B cell (primary cell): ENCODE measurements at regions of chr7 and their contacts with region 1.

Region 1: DNA sequence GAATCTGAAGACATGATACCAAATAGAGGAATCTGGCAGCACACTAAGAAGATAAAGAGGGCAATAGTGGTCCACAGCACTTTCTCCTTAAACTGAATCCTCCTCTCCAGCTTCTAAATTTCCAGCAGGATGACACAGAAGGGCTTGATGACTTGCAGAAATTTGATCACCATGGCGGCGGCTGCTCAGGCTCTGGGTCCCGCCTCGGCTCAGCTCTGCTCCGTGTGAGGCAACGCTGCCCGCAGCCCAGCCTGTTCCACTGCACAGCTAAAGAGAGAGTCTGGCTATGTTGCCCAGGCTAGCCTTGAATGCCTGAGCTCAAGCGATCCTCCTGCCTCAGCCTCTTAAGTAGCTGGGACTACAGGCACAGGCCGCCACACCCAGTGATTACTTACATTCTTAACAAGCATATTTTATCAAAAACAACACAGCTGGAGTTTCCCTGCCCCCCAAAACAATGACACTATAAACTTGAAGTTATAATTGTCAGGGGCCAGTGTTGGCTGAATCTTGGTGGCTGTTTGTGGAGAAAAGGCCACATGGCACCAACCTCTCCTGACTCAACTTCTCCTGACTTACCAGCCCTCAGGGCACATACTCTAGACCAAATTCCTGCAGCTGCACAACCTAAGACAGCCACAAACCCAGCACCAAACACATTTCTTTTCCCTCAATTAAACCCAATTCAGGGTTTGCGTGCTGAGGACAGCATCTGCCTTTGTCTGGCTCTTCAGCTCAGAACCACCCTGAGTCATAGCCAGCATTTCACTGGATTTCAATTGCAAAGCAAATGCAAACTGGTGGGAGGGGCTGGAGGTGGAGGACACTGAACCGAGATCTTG is 11.6 kb upstream of the TNPO3 start:
- DNase-seq: no peak
- ATAC-seq: no peak
- H3K4me3 ChIP-seq: no peak overlapping the region
- H3K4me3 Mint-ChIP-seq: no peak overlapping the region
- H3K27ac ChIP-seq: no peak overlapping the region
- H3K27ac Mint-ChIP-seq: no peak overlapping the region
- H3K4me1 ChIP-seq: no peaks in the 10 kb centered on the region
- H3K4me1 Mint-ChIP-seq: peaks cover 3% of the 10 kb centered on the region
- H3K27me3 ChIP-seq: peaks cover 0 to 6% (median 1%) of the 10 kb centered on the region in 4 experiments
- H3K27me3 Mint-ChIP-seq: peaks cover 2% of the 10 kb centered on the region
- CTCF ChIP-seq: no peak

Region 2: DNA sequence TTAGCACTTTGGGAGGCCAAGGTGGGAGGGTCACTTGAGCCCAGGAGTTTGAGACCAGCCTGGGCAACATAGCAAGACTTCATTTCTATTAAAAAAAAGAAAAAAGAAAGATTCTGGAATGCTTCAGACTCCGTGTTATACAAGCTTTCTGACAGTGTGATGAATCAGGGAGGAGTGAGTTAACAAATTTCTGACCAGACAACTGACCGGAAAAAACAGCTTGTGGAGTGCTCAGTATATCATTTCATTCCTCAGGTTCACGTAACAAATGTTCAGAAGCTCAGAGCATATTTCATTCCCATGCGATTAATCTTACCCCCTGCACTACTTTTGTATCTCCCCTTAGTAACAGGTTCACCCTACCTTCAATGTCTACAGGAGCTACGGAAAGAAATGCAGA is 17.0 kb after region 1 on chr7:
- CTCF ChIA-PET with region 1: interaction called, 3 read pairs
- POLR2A ChIA-PET with region 1: no interaction called
- intact Hi-C with region 1: loop called (anchors 2 kb)
- DNase-seq: no peak
- ATAC-seq: no peak
- H3K4me3 ChIP-seq: no peak overlapping the region
- H3K4me3 Mint-ChIP-seq: no peak overlapping the region
- H3K27ac ChIP-seq: no peak overlapping the region
- H3K27ac Mint-ChIP-seq: no peak overlapping the region
- H3K4me1 ChIP-seq: no peaks in the 10 kb centered on the region
- H3K4me1 Mint-ChIP-seq: no peaks in the 10 kb centered on the region
- H3K27me3 ChIP-seq: no peaks in the 10 kb centered on the region
- H3K27me3 Mint-ChIP-seq: peaks cover 3% of the 10 kb centered on the region
- CTCF ChIP-seq: no peak